ENCODE measurements at regions of chr9 and their contacts with region 1.

Region 1: DNA sequence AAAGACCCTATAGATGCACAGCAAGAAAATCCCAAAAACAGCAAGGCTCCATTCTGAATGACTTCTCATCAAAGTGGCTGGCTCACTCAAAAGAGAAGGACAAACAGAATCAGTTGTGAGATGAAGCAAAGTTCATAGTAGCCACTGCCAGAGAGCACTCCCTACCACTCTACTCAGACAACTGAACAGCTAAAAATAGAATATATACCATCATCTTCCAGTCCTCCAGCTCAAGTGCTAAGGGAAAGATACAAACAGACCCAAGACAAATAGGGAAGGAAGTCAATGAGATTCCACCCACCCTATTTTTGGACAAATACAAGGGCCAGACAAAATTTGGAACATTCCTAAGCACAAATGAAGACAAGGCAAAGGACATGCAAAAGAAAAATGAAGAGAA is 20.6 kb downstream of the GNAQ start:
- DNase-seq: no peak
- ATAC-seq: no peak
- H3K4me3 ChIP-seq: no peak overlapping the region
- H3K4me3 Mint-ChIP-seq: peak overlapping the region in 8 of 10 donors; percentile 59 to 72 (median 63)
- H3K27ac ChIP-seq: no peak overlapping the region
- H3K27ac Mint-ChIP-seq: peak overlapping the region in 8 of 9 donors; percentile 38 to 84 (median 57)
- H3K4me1 ChIP-seq: peaks cover 13 to 28% of the 10 kb centered on the region in 2 donors
- H3K4me1 Mint-ChIP-seq: peaks cover 48 to 79% (median 63%) of the 10 kb centered on the region in 7 donors
- H3K27me3 ChIP-seq: no peaks in the 10 kb centered on the region
- H3K27me3 Mint-ChIP-seq: no peaks in the 10 kb centered on the region

Region 2: DNA sequence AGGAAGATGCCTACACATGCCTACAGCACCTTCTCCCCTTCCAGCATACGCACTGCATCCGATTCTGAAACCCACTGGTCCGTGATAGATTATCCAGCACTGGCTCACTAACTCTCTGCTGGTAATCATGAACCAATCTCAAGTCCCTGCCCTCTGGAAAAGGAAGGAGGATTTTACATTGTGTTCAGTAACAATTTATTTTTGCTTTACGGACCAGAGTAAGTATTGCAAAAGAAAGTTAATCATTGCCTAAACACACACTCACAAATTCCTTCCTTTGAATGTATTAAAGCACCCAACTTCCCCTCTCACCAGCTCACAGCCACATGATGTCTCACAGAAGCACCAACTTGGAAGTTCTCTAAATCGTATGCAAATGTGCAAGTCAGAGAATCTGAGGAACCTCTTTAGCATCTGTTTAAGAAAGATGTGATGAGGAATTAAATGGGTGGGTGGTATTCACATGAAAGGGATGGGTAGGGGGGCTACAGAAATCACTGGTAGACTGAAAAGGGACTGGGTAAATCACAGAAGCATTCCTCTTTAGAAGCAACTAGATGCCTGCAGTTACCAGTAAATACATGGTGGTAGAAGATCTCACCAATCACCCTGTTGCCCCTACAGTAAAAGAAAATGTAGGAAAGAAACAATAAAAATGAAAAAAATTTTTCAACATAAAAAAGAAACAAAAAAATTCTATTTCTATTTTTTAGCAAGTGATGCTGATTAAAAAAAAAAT is 12.1 kb after region 1 on chr9:
- CTCF ChIA-PET with region 1: no interaction called
- POLR2A ChIA-PET with region 1: interaction called, 3 read pairs
- intact Hi-C with region 1: loop called in 1 of 2 experiments (anchors 2 kb)
- DNase-seq: peak in 1 of 9 donors; percentile 21
- ATAC-seq: peak; percentile 83
- H3K4me3 ChIP-seq: no peak overlapping the region
- H3K4me3 Mint-ChIP-seq: peak overlapping the region in 9 of 10 donors; percentile 8 to 84 (median 57)
- H3K27ac ChIP-seq: no peak overlapping the region
- H3K27ac Mint-ChIP-seq: peak overlapping the region in 4 of 9 donors; percentile 24 to 78 (median 54)
- H3K4me1 ChIP-seq: peaks cover 0 to 25% of the 10 kb centered on the region in 2 donors
- H3K4me1 Mint-ChIP-seq: peaks cover 41 to 85% (median 72%) of the 10 kb centered on the region in 7 donors
- H3K27me3 ChIP-seq: no peaks in the 10 kb centered on the region
- H3K27me3 Mint-ChIP-seq: no peaks in the 10 kb centered on the region

Region 3: GRCh38 chr9:78029551-78030295 is 18.7 kb after region 1 on chr9:
- CTCF ChIA-PET with region 1: no interaction called
- POLR2A ChIA-PET with region 1: interaction called, 3 read pairs
- intact Hi-C with region 1: loop called (anchors 1 to 2 kb)
- DNase-seq: peak in 6 of 9 donors; percentile 33 to 58 (median 47)
- ATAC-seq: peak; percentile 20
- H3K4me3 ChIP-seq: peak overlapping the region; percentile 58
- H3K4me3 Mint-ChIP-seq: peak overlapping the region; percentile 80 to 98 (median 93)
- H3K27ac ChIP-seq: peak overlapping the region; percentile 72
- H3K27ac Mint-ChIP-seq: peak overlapping the region; percentile 82 to 97 (median 92)
- H3K4me1 ChIP-seq: peaks cover 5 to 27% of the 10 kb centered on the region in 2 donors
- H3K4me1 Mint-ChIP-seq: peaks cover 48 to 72% (median 61%) of the 10 kb centered on the region in 7 donors
- H3K27me3 ChIP-seq: no peaks in the 10 kb centered on the region
- H3K27me3 Mint-ChIP-seq: no peaks in the 10 kb centered on the region